Activated CD4-positive, alpha-beta T cell treated with anti-CD3 and anti-CD28 coated beads, Interleukin-2, amount 10 ng/mL, durations not matched to agents 24 days and 14 days (primary cell): ENCODE measurements at regions of chr9 and their contacts with region 1.

Region 1: DNA sequence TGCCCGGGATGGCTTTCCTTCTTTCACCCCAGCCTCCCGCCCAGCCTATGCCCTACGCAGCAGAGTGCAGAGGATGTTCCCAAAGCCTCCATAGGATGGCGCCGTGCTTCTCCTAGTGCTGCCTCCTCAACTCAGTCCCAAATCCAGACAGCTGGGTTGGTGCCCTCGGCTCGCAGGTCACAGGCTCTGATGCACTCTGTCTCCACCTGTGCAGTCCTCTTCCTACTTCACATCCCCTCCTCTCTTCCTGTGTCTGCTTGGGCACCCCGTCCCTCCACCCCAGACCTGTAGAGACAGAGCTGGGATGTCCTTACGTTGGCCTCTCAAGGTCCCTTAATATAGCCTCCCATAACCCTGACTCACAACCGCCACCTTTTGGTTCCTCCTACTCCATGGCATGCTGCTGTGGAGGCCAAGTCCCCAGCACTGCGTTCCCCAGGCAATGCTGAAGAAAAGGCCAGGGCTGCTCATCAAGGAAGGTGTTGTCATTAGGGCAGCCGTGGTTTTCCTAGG is 314.4 kb downstream of the GADD45G start:
- DNase-seq: peak; percentile 87
- H3K4me3 Mint-ChIP-seq: no peak overlapping the region
- H3K27ac Mint-ChIP-seq: peak overlapping the region; percentile 56
- H3K4me1 Mint-ChIP-seq: peaks cover 38% of the 10 kb centered on the region
- H3K27me3 Mint-ChIP-seq: peaks cover 3% of the 10 kb centered on the region

Region 2: DNA sequence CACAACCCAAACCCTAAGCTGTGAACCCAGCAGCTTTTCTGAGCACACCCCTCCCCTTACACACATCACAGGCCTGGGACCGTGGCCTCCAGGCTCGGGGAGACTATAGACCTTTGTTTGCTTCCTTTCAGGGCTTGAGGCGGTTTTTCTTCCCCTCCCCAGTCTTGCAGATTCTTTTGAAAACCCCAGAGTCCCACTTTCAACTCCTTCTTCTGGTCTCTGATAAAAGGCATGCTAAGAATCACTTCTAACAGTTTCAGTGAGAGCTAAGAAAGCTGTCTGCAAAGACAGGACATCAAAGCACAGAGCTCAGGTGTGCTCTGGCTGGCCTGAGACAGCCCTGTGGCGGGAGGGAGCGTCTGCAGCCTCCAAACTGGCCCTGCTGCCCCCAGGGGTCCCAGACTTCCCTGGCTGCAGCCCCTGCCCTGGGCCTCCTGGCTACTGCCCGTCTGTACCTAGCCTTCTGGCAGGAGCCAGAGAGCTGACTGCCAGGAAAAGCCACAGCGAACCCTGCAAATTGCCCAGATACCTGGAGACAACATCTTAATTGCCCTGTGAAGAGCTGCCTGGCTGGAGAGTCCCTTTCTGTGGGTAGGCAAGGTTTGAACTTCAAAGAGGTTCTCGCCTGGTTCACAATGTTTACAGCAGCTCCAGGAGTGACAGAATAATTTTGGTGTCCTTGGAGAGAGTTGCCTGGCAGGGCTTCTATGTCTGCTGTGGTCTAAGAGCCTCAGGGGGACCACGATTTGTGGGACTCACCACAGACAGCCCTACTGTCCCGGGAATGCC is 175.5 kb before region 1 on chr9:
- intact Hi-C with region 1: loop called (anchors 2 kb)
- DNase-seq: peak; percentile 94
- H3K4me3 Mint-ChIP-seq: peak overlapping the region; percentile 67
- H3K27ac Mint-ChIP-seq: peak overlapping the region; percentile 87
- H3K4me1 Mint-ChIP-seq: peaks cover 80% of the 10 kb centered on the region
- H3K27me3 Mint-ChIP-seq: no peaks in the 10 kb centered on the region

Region 3: DNA sequence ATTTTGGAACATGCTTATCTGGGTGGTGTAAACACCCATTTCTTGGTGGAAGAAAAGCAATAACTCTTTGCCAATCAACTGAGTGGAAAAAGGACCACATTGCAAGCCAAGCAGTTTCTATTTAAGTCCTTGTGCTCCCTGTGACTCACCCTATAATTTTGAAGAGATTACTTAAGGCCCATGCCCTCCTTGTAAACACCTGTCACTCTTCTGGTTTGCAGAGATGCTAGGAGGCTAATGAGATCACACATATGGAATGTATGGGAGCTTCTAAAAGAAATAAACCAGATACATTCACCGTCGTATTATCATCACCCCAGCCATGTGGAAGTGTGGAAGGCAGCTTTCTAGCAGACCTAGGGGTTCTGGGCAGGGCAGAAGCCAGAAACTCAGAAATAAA is 22.6 kb after region 1 on chr9:
- intact Hi-C with region 1: loop called (anchors 2 kb)
- DNase-seq: no peak
- H3K4me3 Mint-ChIP-seq: no peak overlapping the region
- H3K27ac Mint-ChIP-seq: peak overlapping the region; percentile 0
- H3K4me1 Mint-ChIP-seq: peaks cover 12% of the 10 kb centered on the region
- H3K27me3 Mint-ChIP-seq: peaks cover 28% of the 10 kb centered on the region

Region 4: DNA sequence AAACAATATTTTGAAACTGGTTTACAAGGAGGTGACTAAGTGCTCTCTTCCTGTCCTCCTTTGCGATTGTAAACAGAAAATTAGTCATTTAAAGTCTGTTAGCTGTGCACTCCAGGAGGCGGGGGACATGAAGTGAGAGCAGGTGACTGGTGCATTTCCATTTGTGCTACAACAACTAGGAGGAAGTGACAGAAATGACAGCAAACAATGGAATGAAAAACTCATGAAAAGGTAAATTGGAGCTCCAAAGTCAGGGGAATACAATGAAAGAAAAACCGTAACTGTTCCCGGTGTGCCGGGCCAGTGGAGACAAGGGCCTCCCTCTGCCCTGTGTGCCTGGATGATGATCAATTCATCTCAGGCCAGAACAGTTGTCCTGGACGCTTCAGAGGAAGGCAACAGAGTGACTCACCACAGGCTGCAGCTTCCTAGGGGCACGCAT is 125.5 kb after region 1 on chr9:
- intact Hi-C with region 1: loop called (anchors 1 kb)
- DNase-seq: peak; percentile 66
- H3K4me3 Mint-ChIP-seq: no peak overlapping the region
- H3K27ac Mint-ChIP-seq: peak overlapping the region; percentile 52
- H3K4me1 Mint-ChIP-seq: peaks cover 31% of the 10 kb centered on the region
- H3K27me3 Mint-ChIP-seq: peaks cover 3% of the 10 kb centered on the region

Region 5: DNA sequence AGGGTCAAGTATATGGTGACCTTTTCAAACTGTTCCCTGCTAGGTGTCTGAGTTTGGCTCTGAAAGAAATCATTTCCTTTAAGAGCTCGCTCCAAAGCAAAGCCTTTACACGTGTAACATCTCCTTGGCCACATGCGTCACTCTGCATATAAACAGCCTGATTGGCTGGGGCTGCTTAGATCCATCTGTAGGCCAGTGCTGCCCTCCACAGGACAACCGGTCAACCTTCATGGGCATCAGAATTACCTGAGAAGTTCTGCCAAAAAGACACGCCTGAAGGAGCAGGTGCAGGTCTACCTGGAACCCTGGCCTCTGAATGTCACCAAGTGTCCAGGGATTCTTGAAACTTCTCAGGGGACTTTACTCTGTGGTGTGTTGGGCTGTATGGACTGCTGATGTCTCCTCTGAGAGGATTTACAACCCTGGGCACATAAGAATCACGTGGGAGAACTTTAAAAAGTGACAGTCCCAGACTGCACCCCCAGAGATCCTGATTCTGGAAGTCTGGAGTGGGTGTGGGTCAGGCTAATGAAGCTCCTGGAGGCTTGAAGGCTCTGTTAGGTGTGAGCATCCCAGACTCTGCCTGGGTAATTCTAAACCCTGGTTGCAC is 183.2 kb after region 1 on chr9:
- intact Hi-C with region 1: loop called (anchors 1 kb)
- DNase-seq: peak; percentile 94
- H3K4me3 Mint-ChIP-seq: no peak overlapping the region
- H3K27ac Mint-ChIP-seq: peak overlapping the region; percentile 39
- H3K4me1 Mint-ChIP-seq: peaks cover 14% of the 10 kb centered on the region
- H3K27me3 Mint-ChIP-seq: peaks cover 11% of the 10 kb centered on the region